ENCODE measurements at regions of chr13 and their contacts with region 1.

Region 1: DNA sequence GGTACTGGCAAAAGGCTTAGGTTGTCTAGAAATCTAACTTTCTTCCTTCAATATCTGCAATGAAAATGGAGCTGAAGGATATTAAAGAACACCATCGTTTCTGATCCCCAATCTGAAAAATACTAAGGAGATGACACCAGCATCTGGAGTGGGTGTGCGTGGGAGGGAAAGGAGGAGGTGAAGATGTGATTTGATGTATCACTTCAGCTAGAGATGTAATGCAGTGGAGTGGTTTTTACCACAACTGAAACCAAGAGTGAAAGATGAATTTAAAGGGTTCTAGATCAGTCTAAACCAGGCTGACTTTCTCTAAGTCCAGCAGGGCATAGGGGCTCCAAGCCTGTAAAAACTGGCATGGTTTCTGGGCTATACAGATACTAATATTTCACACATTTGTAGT is 148.4 kb downstream of the AKAP11 start:
- DNase-seq: no peak
- ATAC-seq: no peak
- H3K4me3 ChIP-seq: no peak overlapping the region
- H3K27ac ChIP-seq: no peak overlapping the region
- H3K4me1 ChIP-seq: no peaks in the 10 kb centered on the region
- H3K27me3 ChIP-seq: peaks cover 0 to 7% (median 0%) of the 10 kb centered on the region in 7 donors
- CTCF ChIP-seq: no peak

Region 2: GRCh38 chr13:42440191-42440550 is 19.9 kb after region 1 on chr13:
- intact Hi-C with region 1: loop called in 1 of 10 experiments (anchors 1 kb)
- DNase-seq: no peak
- ATAC-seq: no peak
- H3K4me3 ChIP-seq: no peak overlapping the region
- H3K27ac ChIP-seq: no peak overlapping the region
- H3K4me1 ChIP-seq: no peaks in the 10 kb centered on the region
- H3K27me3 ChIP-seq: no peaks in the 10 kb centered on the region
- CTCF ChIP-seq: no peak

Measured in heart right ventricle (tissue), 16 donors.